HCT116 (cell line): ENCODE measurements at regions of chr1 and their contacts with region 1.

Region 1: DNA sequence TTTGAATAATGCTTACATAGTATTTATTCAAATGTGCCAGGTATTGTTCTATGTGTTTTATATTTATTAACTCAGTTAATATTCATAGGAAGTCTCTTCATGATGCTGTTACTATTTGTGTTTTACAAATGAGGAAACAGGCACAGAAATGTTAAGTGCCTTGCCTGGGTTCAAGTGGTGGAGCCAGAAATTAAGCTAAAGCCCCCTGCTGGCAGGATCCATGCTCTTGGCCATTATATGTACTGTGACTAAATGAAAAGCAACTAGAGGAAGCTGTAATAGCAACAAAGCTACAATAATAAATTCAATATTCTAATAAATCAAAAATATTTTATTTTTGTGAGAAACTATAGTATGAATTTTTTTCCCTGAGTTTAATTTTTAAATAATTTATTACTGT is 30.0 kb downstream of the IARS2 start:
- DNase-seq: peak; percentile 7
- ATAC-seq: peak; percentile 76
- H3K4me3 ChIP-seq: no peak overlapping the region
- H3K27ac ChIP-seq: no peak overlapping the region
- H3K4me1 ChIP-seq: no peaks in the 10 kb centered on the region
- H3K27me3 ChIP-seq: no peaks in the 10 kb centered on the region
- CTCF ChIP-seq: peak; percentile 25 to 62 (median 61); a peak in 4 of 6 replicates
- POLR2A ChIP-seq: no peak
- RAD21 ChIP-seq: no peak

Region 2: DNA sequence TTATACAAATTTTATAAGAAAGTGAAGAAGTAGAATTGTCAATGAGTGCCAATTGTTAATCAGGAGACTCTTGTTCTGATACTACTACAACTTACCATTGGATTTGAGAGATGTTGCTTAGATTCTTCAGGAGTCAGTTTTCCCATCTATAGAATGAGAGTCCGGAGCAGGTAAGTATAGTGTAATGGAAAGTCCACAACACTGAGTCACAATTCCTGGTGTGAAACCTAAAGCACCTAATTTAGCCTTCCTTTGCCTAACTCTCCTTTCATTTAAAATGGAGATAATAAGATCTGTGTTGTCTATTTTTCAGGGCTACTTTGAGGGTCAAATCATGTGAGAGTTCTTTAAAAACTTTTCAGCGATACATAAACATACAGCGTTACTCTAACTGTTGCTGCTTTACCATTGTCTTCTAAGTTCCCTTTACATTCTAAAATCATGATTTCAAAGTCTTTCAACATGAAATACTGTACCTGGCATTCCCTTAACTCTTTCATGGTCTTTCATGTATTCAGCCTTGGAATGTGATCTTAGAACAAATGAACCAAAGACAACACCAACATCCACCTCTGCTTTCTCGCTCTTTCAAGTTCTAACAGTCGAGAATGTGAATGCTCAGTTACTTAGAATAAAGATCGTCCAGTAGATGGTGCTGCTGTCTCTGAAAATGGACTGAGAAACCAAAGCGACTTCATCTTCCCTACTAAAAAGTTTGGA is 286.5 kb before region 1 on chr1:
- CTCF ChIA-PET with region 1: no interaction called
- POLR2A ChIA-PET with region 1: no interaction called
- RAD21 ChIA-PET with region 1: no interaction called
- intact Hi-C with region 1: loop called (anchors 10 kb)
- DNase-seq: peak; percentile 60
- ATAC-seq: peak; percentile 88
- H3K4me3 ChIP-seq: no peak overlapping the region
- H3K27ac ChIP-seq: no peak overlapping the region
- H3K4me1 ChIP-seq: no peaks in the 10 kb centered on the region
- H3K27me3 ChIP-seq: peaks cover 7% of the 10 kb centered on the region; the same call in 1 of the 2 replicates
- CTCF ChIP-seq: peak; percentile 60 to 80 (median 63)
- POLR2A ChIP-seq: no peak
- RAD21 ChIP-seq: peak; percentile 89

Region 3: DNA sequence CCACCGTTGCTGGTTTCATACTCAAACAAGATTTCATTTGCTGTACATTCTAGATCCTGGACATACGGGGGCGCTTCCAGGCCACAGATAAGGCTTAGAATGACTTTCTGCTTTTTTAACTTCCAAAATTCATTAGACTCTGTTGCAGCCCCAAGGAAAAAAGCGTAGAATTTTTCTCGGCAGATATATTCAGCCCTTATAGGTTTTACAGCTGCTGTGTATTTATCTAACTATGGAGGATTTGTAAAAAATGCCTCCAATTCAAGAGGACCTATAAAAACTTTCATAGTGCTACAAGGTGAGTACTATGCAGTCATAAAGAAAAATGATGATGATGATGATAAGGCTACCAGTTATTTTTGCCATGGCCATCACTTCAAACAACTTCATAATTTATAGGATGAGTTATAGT is 247.1 kb before region 1 on chr1:
- CTCF ChIA-PET with region 1: no interaction called
- POLR2A ChIA-PET with region 1: no interaction called
- RAD21 ChIA-PET with region 1: no interaction called
- intact Hi-C with region 1: loop called (anchors 10 kb)
- DNase-seq: peak; percentile 23
- ATAC-seq: peak; percentile 91
- H3K4me3 ChIP-seq: no peak overlapping the region
- H3K27ac ChIP-seq: no peak overlapping the region
- H3K4me1 ChIP-seq: no peaks in the 10 kb centered on the region
- H3K27me3 ChIP-seq: peaks cover 37% of the 10 kb centered on the region
- CTCF ChIP-seq: peak; percentile 57 to 60 (median 59); a peak in 5 of 6 replicates
- POLR2A ChIP-seq: no peak
- RAD21 ChIP-seq: peak; percentile 88

Region 4: DNA sequence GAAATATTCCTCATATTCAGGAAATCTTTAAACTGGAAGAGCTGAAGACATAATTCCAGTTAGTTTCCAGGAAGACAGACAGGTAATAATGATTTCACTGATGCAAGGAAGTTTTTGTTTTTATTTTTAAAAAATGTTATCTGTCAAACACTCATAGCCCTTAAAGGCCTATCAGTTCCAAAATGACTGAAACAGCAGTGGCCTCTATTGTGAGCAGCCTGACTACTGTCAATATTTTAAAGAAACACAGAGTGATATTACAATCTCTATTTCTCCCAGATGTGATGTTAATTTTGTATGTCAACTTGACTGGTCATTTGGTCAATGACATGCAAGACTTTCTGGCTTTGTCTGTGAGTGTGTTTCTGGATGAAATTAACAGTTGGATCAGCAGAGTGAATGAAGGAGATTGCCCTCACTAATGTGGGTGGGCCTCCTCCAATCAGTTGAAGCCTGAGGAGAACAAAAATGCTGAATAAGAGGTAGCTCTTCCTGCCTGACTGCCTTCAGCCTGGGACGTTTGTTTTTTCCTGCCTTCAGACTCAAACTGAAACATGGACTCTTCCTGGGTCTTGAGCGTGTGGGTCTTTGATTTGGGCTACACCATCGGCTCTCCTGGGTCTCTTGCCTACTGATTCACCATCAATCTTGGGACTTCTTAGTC is 164.2 kb before region 1 on chr1:
- CTCF ChIA-PET with region 1: no interaction called
- POLR2A ChIA-PET with region 1: no interaction called
- RAD21 ChIA-PET with region 1: no interaction called
- intact Hi-C with region 1: no loop called
- DNase-seq: no peak
- ATAC-seq: no peak
- H3K4me3 ChIP-seq: no peak overlapping the region
- H3K27ac ChIP-seq: no peak overlapping the region
- H3K4me1 ChIP-seq: no peaks in the 10 kb centered on the region
- H3K27me3 ChIP-seq: no peaks in the 10 kb centered on the region
- CTCF ChIP-seq: no peak
- POLR2A ChIP-seq: no peak
- RAD21 ChIP-seq: no peak

Region 5: GRCh38 chr1:220113136-220113695 is 10.7 kb before region 1 on chr1:
- CTCF ChIA-PET with region 1: interaction called, 15 read pairs
- POLR2A ChIA-PET with region 1: no interaction called
- RAD21 ChIA-PET with region 1: no interaction called
- intact Hi-C with region 1: no loop called
- DNase-seq: no peak
- ATAC-seq: peak; percentile 67
- H3K4me3 ChIP-seq: no peak overlapping the region
- H3K27ac ChIP-seq: no peak overlapping the region
- H3K4me1 ChIP-seq: no peaks in the 10 kb centered on the region
- H3K27me3 ChIP-seq: no peaks in the 10 kb centered on the region
- CTCF ChIP-seq: peak; percentile 16 to 72 (median 67); a peak in 5 of 6 replicates
- POLR2A ChIP-seq: no peak
- RAD21 ChIP-seq: peak; percentile 22; the same call in 1 of the 2 replicates